ENCODE measurements at regions of chr1 and their contacts with region 1.

Region 1: DNA sequence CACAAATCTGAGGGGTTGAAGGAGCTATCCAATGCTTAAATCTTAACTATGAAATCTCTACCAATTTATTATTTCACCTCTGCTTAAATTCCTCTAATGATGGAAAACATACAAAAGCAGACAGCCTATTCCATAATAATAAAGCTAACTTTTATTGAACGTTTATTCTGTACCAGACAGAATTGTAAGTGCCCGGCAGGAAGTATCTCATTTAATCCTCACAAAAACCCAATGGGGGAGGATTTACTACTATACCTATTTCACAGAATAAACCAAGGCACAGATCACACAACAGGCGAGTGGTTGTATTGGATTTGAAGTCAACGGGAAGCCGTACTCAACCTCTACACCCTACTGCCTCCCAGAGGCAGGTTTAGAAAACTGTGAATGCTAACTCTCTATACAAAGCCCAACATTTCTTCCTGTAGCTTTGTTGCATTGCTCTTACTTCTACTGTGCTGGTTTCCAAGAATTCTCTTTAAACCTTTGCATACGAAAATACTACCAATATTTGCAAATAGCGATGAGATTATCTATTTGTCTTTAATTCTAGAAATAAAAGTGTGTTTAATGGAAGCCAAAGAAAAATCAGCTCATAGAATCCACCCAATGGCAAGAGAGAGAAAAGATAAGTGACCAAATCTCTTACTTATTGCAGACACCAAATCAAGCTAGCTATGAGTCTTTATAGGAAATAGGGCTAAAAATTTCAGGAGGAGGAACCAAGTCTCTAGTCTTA is 33.5 kb upstream of the C1orf53 start:
- DNase-seq: no peak
- H3K4me3 ChIP-seq: no peak overlapping the region
- CTCF ChIP-seq: peak; percentile 55

Region 2: DNA sequence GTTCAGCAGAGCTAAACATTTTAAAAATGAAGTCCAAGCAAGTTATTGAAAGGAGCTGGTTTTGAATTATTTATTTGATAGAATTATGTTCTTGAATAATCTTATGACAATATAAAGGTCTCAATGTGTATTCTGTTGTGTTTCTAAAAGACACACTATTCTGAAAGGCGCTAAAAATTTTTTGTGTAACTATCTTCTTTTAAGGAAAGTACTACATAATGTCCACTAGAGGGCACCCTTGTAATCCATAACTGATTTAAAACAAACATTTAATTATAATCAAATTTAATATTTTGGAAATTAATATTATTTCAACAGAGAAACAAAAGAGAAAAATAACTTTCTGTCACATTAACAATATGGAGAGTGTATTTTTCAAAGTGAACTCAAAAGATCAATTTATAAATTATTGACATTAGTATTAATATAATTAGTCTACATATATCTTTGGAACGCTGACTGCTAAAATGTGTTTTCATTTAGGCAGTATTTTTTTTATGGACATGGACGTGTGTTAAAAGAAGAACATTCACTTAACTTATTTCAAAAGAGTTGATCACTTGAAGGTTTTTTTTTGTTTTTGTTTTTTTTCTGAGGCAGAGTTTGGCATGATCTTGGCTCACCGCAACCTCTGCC is 342.1 kb before region 1 on chr1:
- CTCF ChIA-PET with region 1: interaction called, 10 read pairs
- POLR2A ChIA-PET with region 1: no interaction called
- DNase-seq: no peak
- H3K4me3 ChIP-seq: no peak overlapping the region
- CTCF ChIP-seq: peak; percentile 2

Region 3: DNA sequence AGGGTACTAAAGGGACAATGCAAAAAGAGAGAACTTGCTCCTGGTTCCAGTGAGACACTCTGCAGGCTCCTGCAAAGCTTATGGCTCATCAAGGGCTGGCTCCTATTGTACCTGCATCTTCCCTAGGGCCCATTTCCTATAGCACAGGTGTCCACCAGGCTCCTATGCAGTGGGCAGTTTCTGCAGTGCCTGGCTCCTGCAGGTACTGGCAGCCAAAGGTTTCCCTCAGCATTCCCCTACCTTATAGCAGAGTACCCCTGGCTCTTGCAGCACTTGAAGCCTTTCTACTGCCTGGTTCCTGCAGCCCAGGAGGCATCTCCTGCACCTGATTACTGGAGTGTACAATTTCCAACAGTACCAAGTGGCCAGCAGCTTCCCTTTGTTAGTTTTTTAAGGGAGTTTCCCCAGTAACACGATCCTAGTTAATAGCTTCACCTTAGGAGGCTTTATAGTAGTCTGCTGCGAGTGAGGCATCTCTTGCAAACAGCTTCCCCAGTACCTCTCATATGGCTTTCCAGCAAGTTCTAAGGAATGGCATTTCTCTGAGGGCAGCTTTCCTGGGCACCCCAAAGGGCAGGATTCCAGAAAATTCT is 235.4 kb before region 1 on chr1:
- CTCF ChIA-PET with region 1: interaction called, 13 read pairs
- POLR2A ChIA-PET with region 1: no interaction called
- DNase-seq: no peak
- H3K4me3 ChIP-seq: no peak overlapping the region
- CTCF ChIP-seq: no peak

Region 4: DNA sequence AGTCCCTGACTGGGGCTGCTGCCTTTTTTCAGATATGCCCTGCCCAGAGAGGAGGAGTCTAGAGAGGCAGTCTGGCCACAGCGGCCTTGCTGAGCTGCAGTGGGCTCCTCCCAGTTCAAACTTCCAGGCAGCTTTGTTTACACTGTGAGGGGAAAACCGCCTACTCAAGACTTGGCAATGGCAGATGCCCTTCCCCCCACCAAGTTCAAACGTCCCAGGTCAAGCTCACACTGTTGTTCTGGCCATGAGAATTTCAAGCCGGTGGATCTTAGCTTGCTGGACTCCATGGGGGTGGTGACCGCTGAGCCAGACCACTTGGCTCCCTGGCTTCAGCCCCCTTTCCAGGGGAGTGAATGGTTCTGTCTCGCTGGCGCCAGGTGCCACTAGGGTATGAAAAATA is 15.3 kb after region 1 on chr1:
- CTCF ChIA-PET with region 1: interaction called, 14 read pairs
- POLR2A ChIA-PET with region 1: no interaction called
- DNase-seq: no peak
- H3K4me3 ChIP-seq: no peak overlapping the region
- CTCF ChIP-seq: no peak

Region 5: GRCh38 chr1:197915862-197916499 is 47.1 kb after region 1 on chr1:
- CTCF ChIA-PET with region 1: interaction called, 10 read pairs
- POLR2A ChIA-PET with region 1: no interaction called
- DNase-seq: no peak
- H3K4me3 ChIP-seq: peak overlapping the region; percentile 80
- CTCF ChIP-seq: peak; percentile 89